ENCODE measurements at regions of chr22 and their contacts with region 1.

Region 1: DNA sequence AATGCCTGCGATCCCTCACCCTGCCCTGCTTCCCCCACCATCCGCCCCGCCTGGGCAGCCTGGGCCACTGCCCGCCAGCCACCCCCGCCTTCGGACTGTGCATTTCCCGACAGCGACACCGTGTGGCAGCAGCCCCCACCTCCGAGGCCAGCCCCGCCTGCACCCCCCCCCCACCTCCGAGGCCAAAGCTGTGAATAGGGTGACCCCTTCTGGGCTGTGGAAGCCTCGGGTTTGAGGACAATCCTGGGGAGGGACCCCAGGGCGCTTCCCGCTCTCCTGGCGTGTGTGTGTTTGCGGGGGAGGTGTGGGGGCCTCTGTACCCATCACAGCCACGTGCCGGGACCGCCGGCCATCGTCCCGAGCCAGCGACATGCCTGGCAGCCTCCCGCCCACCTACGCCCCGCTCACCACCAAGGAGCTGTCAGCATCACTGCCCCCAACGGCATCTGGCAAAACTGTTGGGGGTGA is 33.8 kb upstream of the PPARA start:
- DNase-seq: peak; percentile 96
- CTCF ChIP-seq: peak; percentile 71

Region 2: GRCh38 chr22:45612451-45612901 is 504.0 kb before region 1 on chr22:
- CTCF ChIA-PET with region 1: no interaction called
- POLR2A ChIA-PET with region 1: no interaction called
- DNase-seq: no peak
- CTCF ChIP-seq: no peak

Region 3: GRCh38 chr22:45984316-45984916 is 132.1 kb before region 1 on chr22:
- CTCF ChIA-PET with region 1: interaction called, 13 read pairs
- POLR2A ChIA-PET with region 1: no interaction called
- DNase-seq: no peak
- CTCF ChIP-seq: no peak

Region 4: GRCh38 chr22:45994491-45995404 is 121.8 kb before region 1 on chr22:
- CTCF ChIA-PET with region 1: interaction called, 108 read pairs
- POLR2A ChIA-PET with region 1: no interaction called
- DNase-seq: peak; percentile 83
- CTCF ChIP-seq: peak; percentile 96

Region 5: DNA sequence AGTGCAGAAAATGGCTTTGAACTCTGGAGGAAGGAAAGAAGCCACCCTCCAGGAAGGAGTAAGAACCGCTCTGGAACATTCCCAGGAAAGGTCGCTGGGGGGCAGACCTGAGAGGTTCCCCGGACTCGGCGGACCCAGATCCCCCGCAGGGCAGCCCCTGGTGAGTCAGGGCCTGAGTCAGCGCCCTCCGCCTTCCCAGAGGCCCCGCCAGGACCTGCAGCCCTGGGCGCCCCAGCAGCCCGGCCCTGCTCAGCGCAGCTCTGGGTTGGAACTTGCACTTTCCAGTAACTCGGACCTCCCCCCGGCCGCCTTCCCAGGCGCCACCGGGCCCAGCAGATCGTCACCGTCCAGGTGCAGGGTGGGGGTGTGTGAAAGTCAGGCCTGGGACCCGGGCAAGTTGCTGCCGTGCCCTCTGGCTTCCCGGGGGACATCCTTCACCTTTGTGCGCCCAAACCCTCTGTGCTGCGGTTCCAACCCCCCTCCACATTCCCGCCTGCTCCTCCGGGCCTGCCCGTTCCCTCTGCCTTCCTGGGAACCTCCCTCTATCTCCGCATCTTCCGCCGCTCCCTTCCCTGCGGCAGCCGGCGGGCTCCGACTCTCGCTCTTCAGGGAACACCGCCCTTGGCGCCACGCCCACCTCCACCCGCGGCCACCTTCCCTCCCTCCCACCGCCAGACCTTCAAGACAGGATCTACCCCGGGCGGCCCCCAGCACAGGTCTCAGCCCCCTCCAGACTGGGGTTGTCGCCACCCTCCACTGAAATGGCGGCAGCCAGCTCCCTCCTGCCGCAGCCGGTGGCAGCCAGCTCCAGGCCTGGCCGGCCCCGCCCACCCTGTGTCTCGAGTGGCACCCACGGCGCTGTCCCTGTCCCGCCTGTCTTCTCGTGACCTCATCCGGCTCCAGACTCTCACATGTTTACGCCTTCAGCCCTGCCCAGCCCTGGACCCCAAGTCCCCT is 102.8 kb before region 1 on chr22:
- CTCF ChIA-PET with region 1: interaction called, 254 read pairs
- POLR2A ChIA-PET with region 1: no interaction called
- DNase-seq: peak; percentile 90
- CTCF ChIP-seq: peak; percentile 58

Region 6: DNA sequence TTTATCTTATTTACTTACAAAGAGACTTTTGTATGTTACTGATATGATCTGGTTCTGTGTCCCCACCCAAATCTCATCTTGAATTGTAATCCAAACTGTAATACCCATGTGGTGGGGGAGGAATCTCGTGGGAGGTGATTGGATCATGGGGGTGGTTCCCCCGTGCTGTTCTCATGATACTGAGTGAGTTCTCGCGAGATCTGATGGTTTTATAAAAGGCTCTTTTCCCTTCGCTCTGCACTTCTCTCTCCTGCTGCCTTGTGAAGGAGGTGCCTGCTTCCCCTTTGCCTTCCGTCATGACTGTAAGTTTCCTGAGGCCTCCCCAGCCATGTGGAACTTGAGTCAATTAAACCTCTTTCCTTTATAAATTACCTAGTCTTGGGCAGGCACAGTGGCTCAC is 97.2 kb before region 1 on chr22:
- CTCF ChIA-PET with region 1: interaction called, 28 read pairs
- POLR2A ChIA-PET with region 1: no interaction called
- DNase-seq: no peak
- CTCF ChIP-seq: no peak

Region 7: GRCh38 chr22:46317646-46318045 is 201.1 kb after region 1 on chr22:
- CTCF ChIA-PET with region 1: interaction called, 107 read pairs
- POLR2A ChIA-PET with region 1: no interaction called
- DNase-seq: no peak
- CTCF ChIP-seq: no peak

Measured in GM10248 (cell line).